Uterus (tissue), 4 donors: ENCODE measurements at regions of chr2 and their contacts with region 1.

Region 1: GRCh38 chr2:237744613-237745249 is 53.8 kb upstream of the RBM44 start:
- DNase-seq: peak; percentile 80 to 85
- H3K4me3 ChIP-seq: no peak overlapping the region
- H3K27ac ChIP-seq: peak overlapping the region; percentile 80 to 91
- H3K4me1 ChIP-seq: peaks cover 3 to 28% of the 10 kb centered on the region in 2 donors
- H3K27me3 ChIP-seq: no peaks in the 10 kb centered on the region
- CTCF ChIP-seq: peak; percentile 96 to 99 (median 98)
- POLR2A ChIP-seq: peak in 1 of 2 donors; percentile 24

Region 2: DNA sequence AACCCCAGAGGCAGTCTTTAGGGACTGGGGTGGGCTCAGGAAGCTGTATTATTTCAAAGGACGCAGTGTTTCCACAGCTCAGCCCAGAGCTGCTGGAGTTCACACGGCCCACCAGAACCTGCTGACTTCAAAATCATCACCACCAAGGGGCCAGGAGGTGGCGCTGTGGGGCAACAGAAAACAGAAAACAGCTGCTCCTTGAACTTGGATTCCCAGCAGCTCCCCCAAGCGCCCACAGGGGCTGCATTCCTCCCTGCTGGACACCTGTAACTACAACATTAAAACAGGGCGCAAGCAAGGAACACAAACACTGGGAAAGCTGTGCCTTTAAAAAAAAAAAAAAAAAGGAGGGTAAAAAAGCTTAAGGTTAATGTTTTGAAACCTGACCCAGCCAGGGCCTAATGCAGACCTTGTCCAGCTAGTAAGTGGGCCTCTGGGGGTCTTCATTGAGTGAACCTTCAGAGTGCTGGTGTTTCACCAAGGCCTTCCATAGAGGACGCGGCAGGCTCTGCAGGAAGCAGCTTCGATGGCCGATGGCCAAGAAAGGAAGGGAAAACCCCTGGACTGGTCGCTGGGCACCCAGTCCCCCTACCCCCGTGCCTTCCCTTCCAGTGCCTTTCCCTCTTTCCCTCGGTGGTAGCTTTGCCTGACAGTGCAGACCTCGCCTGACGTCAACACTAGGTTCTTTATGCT is 231.8 kb before region 1 on chr2:
- intact Hi-C with region 1: loop called (anchors 10 kb)
- DNase-seq: peak; percentile 90 to 92
- H3K4me3 ChIP-seq: no peak overlapping the region
- H3K27ac ChIP-seq: peak overlapping the region; percentile 67 to 77
- H3K4me1 ChIP-seq: no peaks in the 10 kb centered on the region
- H3K27me3 ChIP-seq: no peaks in the 10 kb centered on the region
- CTCF ChIP-seq: peak; percentile 89 to 97 (median 95)
- POLR2A ChIP-seq: no peak

Region 3: DNA sequence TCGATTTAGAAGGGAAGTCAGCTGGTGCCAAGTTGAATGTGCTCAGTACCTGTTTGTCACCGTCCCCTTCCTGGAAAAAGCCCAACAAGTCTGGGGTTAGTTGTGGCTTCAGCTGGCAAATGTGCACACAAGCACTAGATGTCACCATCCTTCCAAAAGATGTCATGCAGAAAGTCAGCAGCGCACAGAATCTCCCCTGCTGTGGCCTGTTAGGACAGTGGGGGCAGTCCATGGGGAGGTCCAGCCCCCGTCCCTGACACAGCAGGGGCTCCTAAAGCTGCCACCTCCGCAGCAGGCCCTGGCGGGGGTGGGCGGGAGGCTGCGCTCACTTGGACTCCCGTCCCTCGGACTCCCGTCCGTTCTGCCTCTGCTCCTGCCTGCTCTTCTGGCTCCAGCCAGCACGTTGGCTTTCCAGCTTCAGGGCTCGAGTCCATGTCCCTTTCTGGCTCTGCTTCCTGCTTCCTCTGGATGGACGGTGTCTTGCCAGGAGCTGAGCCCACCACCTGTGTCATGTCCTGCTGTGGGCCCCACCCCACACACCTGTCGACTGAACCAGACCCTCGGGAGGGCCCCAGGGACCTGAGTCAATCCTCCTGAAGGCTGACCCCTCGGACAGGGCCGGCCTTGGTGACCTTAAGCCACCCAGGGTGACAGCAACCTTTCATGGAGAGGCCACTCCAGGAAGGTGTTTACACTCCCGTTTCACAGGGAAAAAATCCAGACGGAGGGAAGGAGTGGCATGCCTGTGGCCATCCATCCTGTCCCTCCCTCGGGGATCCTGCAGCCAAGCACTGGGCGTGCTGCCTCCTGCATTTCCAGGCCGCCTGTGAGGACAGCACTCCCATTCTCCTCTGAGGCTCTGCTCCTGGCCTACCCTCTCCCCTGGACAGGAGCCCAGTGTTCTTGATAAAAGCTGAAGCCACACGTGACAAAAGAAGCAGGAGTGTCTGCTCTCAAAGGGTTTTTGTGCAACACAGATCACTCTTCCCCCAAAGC is 162.7 kb before region 1 on chr2:
- intact Hi-C with region 1: loop called (anchors 2 kb)
- DNase-seq: peak; percentile 75 to 81
- H3K4me3 ChIP-seq: no peak overlapping the region
- H3K27ac ChIP-seq: peak overlapping the region; percentile 66 to 76
- H3K4me1 ChIP-seq: no peaks in the 10 kb centered on the region
- H3K27me3 ChIP-seq: no peaks in the 10 kb centered on the region
- CTCF ChIP-seq: peak; percentile 45 to 68 (median 54)
- POLR2A ChIP-seq: no peak

Region 4: GRCh38 chr2:237594514-237594871 is 150.2 kb before region 1 on chr2:
- intact Hi-C with region 1: no loop called
- DNase-seq: no peak
- H3K4me3 ChIP-seq: no peak overlapping the region
- H3K27ac ChIP-seq: peak overlapping the region; percentile 54 to 70
- H3K4me1 ChIP-seq: no peaks in the 10 kb centered on the region
- H3K27me3 ChIP-seq: no peaks in the 10 kb centered on the region
- CTCF ChIP-seq: no peak
- POLR2A ChIP-seq: no peak

Region 5: GRCh38 chr2:237674731-237675276 is 69.9 kb before region 1 on chr2:
- intact Hi-C with region 1: loop called (anchors 5 kb)
- DNase-seq: peak; percentile 84 to 89
- H3K4me3 ChIP-seq: no peak overlapping the region
- H3K27ac ChIP-seq: peak overlapping the region; percentile 92 to 97
- H3K4me1 ChIP-seq: peaks cover 16 to 20% of the 10 kb centered on the region in 2 donors
- H3K27me3 ChIP-seq: no peaks in the 10 kb centered on the region
- CTCF ChIP-seq: peak in 3 of 4 experiments; percentile 2 to 43 (median 31)
- POLR2A ChIP-seq: peak; percentile 37 to 60

Region 6: GRCh38 chr2:237858294-237859081 is 113.8 kb after region 1 on chr2:
- intact Hi-C with region 1: no loop called
- DNase-seq: peak; percentile 83
- H3K4me3 ChIP-seq: peak overlapping the region; percentile 71 to 75
- H3K27ac ChIP-seq: peak overlapping the region; percentile 98 to 100
- H3K4me1 ChIP-seq: peaks cover 8 to 12% of the 10 kb centered on the region in 2 donors
- H3K27me3 ChIP-seq: no peaks in the 10 kb centered on the region
- CTCF ChIP-seq: peak; percentile 83 to 94 (median 90)
- POLR2A ChIP-seq: peak in 1 of 2 donors; percentile 22